CD8-positive, alpha-beta memory T cell (primary cell): ENCODE measurements at regions of chr1 and their contacts with region 1.

Region 1: DNA sequence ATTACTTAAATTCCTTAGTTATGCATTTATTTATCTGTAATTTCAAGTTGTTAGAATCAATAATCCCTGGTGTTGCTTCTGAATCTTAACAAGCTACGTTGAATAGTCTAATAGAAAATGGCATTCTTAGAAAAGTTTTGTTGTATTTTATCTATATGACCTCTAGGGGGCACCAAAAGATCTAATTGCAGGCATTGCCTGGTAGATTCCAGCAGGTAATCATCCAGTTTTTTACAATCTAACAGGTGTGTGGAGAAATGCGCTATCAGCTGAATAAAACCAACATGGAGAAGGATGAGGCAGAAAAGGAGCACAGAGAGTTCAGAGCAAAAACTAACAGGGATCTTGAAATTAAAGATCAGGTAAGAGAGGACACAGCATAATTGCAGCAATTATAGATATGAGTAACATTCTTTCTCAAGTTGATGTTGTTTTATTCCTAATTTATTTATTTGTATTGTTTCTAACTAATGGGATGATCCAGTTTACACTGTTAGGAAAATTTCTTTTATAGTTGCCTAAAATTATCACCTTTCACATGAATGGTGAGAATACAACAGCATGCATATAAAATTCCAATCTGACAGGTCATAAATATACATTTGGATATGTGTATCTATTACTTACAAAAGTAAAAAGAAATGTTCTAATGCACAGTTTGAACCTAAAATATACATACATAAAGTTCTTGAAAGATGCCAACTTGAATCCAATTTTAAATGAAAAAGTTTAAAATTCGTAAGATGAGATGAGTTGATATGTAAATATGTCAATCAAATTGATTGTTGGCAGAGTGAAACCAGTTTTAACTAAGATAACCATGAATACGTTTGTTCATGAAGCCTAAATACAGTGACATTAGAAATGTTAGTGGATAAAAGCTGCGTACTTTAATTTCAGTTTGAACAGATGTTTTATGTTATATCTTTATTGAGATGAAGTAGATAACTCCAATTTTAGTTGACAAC is 88.4 kb downstream of the SDCCAG8 start:
- DNase-seq: peak in 2 of 5 donors; percentile 35 to 38
- H3K4me3 ChIP-seq: no peak overlapping the region
- H3K4me3 Mint-ChIP-seq: no peak overlapping the region
- H3K27ac ChIP-seq: no peak overlapping the region
- H3K27ac Mint-ChIP-seq: peak overlapping the region in 1 of 8 donors; percentile 25
- H3K4me1 ChIP-seq: no peaks in the 10 kb centered on the region
- H3K4me1 Mint-ChIP-seq: peaks cover 0 to 6% (median 0%) of the 10 kb centered on the region in 3 donors
- H3K27me3 ChIP-seq: no peaks in the 10 kb centered on the region
- H3K27me3 Mint-ChIP-seq: no peaks in the 10 kb centered on the region

Region 2: DNA sequence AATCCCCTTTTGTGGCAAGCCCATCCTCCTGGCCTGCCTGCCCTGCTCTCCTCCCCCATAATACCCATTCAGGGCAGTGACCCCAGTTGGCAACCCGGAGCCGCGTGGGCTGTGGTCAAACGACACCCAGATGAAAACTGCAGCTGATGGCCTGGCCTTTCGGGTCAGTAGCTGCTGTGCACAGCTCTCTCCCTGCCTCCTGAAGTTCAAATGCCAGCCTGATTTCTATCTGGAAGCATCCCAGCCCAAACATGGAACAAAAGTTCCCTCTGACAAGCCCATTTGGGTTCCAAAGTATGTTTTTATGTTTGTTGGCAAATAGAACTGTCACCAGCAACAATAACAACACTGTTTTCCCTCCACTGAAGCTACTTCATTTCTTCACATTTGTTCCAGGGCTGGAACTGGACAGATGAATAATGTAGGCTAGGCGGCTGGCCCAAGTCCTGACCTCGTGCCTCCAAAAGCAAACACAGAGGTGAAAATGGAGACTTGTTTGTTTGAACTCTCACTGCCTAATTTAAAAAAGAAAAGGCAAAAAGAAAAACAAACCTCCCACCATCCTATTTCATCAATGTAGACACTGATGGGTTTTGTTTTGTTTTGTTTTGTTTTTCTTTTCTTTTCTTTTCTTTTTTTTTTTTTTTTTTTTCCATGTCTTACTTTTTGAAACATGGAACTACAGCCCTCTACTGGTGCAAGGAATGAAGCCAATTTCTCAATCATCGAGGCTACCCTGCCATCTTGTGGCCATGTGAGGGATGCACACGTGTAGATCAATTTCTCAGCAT is 928.4 kb after region 1 on chr1:
- CTCF ChIA-PET with region 1: interaction called, 15 read pairs
- POLR2A ChIA-PET with region 1: no interaction called
- DNase-seq: peak; percentile 40 to 76 (median 59)
- H3K4me3 ChIP-seq: no peak overlapping the region
- H3K4me3 Mint-ChIP-seq: no peak overlapping the region
- H3K27ac ChIP-seq: no peak overlapping the region
- H3K27ac Mint-ChIP-seq: peak overlapping the region in 2 of 8 donors; percentile 2 to 44
- H3K4me1 ChIP-seq: no peaks in the 10 kb centered on the region
- H3K4me1 Mint-ChIP-seq: peaks cover 0 to 6% (median 5%) of the 10 kb centered on the region in 3 donors
- H3K27me3 ChIP-seq: no peaks in the 10 kb centered on the region
- H3K27me3 Mint-ChIP-seq: peaks cover 0 to 1% of the 10 kb centered on the region in 2 donors